OCI-LY7 (cell line): ENCODE measurements at regions of chr13 and their contacts with region 1.

Region 1: GRCh38 chr13:50467156-50468110 is 376.1 kb downstream of the DLEU7 start:
- DNase-seq: no peak
- H3K4me3 ChIP-seq: no peak overlapping the region
- H3K27ac ChIP-seq: no peak overlapping the region
- H3K4me1 ChIP-seq: peaks cover 9% of the 10 kb centered on the region
- CTCF ChIP-seq: no peak

Region 2: GRCh38 chr13:48890391-48890790 is 1577.0 kb before region 1 on chr13:
- CTCF ChIA-PET with region 1: no interaction called
- POLR2A ChIA-PET with region 1: no interaction called
- intact Hi-C with region 1: no loop called
- DNase-seq: no peak
- H3K4me3 ChIP-seq: no peak overlapping the region
- H3K27ac ChIP-seq: no peak overlapping the region
- H3K4me1 ChIP-seq: no peaks in the 10 kb centered on the region
- CTCF ChIP-seq: no peak

Region 3: DNA sequence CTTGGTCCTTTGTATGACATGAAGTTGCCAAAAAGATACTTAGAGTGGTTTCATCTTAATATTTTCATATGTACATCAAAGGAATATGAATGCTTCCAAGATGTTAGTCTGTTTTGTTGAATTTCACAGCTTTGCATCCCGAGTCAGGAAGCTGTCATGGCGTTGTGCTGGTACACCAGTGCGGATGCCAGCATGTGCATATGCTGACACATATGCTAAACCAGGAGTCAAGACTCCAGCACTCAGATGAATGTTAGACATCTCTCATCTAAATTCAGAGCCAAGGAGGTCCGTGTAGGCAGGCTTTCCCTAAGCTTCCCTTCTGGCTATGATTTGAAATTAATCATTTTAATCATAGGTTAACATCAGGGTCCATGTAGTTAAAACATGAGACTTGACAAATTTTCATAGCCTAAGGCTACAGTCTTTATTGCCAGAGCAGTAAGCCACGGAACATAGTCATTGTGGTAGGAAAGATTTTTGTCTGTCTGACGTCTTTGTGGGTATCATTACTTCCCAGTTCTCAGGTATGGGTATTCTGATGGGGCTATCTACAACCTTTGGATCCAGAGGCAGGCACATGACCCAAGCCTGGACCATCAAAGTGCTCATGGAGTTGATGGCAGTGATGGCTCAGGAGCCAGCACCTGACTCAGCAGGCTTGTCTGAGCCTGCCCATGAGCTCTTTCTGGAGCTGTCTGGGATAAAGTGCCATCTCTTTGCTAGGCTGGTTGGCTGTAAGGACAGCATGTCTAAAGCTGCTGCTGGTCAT is 206.1 kb before region 1 on chr13:
- CTCF ChIA-PET with region 1: no interaction called
- POLR2A ChIA-PET with region 1: no interaction called
- intact Hi-C with region 1: no loop called
- DNase-seq: no peak
- H3K4me3 ChIP-seq: no peak overlapping the region
- H3K27ac ChIP-seq: no peak overlapping the region
- H3K4me1 ChIP-seq: peaks cover 10% of the 10 kb centered on the region
- CTCF ChIP-seq: no peak

Region 4: DNA sequence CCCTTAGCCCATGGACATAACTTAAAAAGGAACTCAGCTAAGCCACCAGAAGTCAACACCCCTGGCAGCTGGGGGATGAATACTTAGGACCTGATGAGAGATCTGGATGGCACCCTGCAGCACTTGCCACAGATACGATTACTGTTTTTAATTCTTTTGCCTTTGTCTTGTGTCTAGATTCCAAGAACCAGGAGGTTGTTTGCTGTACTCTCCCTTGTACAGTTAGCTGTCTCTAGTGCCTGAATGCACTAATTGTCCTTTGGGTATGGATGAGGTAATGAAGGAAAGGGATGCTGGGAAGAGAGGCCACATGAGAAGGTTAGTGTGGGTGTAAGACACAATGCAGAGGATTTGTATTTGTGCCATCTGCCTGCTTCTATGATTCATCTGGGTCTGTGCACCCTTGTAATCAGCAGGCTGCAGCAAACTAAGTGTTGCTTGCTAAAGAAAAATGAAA is 66.4 kb before region 1 on chr13:
- CTCF ChIA-PET with region 1: no interaction called
- POLR2A ChIA-PET with region 1: no interaction called
- intact Hi-C with region 1: loop called (anchors 10 kb)
- DNase-seq: no peak
- H3K4me3 ChIP-seq: no peak overlapping the region
- H3K27ac ChIP-seq: no peak overlapping the region
- H3K4me1 ChIP-seq: peaks cover 8% of the 10 kb centered on the region
- CTCF ChIP-seq: no peak

Region 5: GRCh38 chr13:50693727-50694126 is 226.3 kb after region 1 on chr13:
- CTCF ChIA-PET with region 1: no interaction called
- POLR2A ChIA-PET with region 1: no interaction called
- intact Hi-C with region 1: no loop called
- DNase-seq: no peak
- H3K4me3 ChIP-seq: no peak overlapping the region
- H3K27ac ChIP-seq: no peak overlapping the region
- H3K4me1 ChIP-seq: no peaks in the 10 kb centered on the region
- CTCF ChIP-seq: no peak

Region 6: GRCh38 chr13:50766013-50766412 is 298.6 kb after region 1 on chr13:
- CTCF ChIA-PET with region 1: no interaction called
- POLR2A ChIA-PET with region 1: no interaction called
- intact Hi-C with region 1: no loop called
- DNase-seq: no peak
- H3K4me3 ChIP-seq: no peak overlapping the region
- H3K27ac ChIP-seq: no peak overlapping the region
- H3K4me1 ChIP-seq: peaks cover 30% of the 10 kb centered on the region
- CTCF ChIP-seq: no peak